Mammary epithelial cell (primary cell): ENCODE measurements at regions of chr20 and their contacts with region 1.

Region 1: GRCh38 chr20:18783385-18783959 is 30.1 kb upstream of the SCP2D1 start:
- DNase-seq: no peak
- H3K4me3 ChIP-seq: no peak overlapping the region
- H3K27ac ChIP-seq: no peak overlapping the region
- H3K4me1 ChIP-seq: no peaks in the 10 kb centered on the region
- H3K27me3 ChIP-seq: no peaks in the 10 kb centered on the region
- CTCF ChIP-seq: no peak

Region 2: DNA sequence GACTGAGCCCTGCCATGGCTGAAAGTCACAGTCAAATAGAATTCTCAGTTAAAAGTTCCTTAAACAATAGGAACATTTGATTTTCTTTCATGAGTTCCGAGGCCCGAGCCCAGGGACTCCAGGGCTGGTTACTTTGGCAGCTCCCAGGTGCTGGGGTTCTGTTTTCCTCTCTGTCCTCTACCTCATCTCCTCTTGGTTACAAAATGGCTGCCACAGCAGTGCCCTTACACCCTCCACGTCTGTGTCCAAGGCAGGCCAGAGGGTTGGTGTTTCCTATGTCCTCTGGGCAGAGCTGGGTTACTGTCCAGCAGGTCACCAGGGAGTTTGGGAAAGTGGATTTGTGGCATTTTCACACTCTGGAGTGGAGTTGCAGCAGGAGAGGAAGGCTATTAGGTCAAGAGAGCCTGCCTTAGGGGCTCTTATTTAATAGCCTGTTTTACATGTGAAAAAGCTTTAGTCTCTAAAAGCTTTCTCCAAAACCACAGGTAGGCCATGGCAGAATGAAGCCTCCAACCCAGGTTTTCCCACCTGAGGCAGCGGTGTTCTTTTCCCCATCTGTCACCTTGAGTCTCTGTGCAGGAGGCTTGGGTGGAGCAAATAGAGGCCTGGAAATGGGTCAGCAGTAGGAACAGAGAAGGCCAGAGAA is 84.6 kb before region 1 on chr20:
- CTCF ChIA-PET with region 1: no interaction called
- dilution Hi-C with region 1: loop called (anchors 5 kb)
- in situ Hi-C with region 1: no loop called
- intact Hi-C with region 1: no loop called
- DNase-seq: no peak
- H3K4me3 ChIP-seq: no peak overlapping the region
- H3K27ac ChIP-seq: no peak overlapping the region
- H3K4me1 ChIP-seq: peaks cover 7% of the 10 kb centered on the region
- H3K27me3 ChIP-seq: no peaks in the 10 kb centered on the region
- CTCF ChIP-seq: no peak

Region 3: GRCh38 chr20:18739751-18740166 is 43.7 kb before region 1 on chr20:
- CTCF ChIA-PET with region 1: no interaction called
- dilution Hi-C with region 1: no loop called
- in situ Hi-C with region 1: no loop called
- intact Hi-C with region 1: no loop called
- DNase-seq: no peak
- H3K4me3 ChIP-seq: no peak overlapping the region
- H3K27ac ChIP-seq: no peak overlapping the region
- H3K4me1 ChIP-seq: no peaks in the 10 kb centered on the region
- H3K27me3 ChIP-seq: no peaks in the 10 kb centered on the region
- CTCF ChIP-seq: no peak

Region 4: DNA sequence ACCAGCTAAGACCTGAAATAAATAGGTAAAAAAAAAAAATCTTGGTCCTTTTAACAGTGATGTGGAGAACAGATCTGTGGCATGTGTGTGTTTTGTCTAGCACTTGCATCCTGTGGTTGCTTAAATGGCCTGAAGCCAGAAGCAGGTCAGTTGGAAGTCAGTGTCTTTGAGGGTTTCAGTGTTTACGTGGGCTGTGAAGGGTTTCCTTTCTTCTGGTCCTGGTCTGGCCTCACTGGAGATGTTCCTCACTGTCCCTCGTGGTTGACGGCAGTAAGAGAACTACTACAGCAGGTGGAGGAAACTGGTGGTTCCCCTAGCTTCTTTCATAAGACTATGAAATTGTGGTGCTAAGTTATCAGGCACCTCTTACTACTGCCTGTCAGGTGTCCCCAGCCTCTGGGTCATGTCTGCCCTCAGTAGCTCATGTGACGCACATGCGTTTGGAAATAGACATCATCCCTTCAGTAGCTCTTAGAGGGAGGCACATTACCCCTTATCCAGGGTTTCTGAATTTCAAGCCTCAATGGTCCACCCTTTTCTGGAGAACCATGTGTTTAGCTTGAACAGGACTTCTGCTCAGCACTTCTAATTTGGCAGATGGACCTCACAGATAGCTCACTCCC is 29.3 kb before region 1 on chr20:
- CTCF ChIA-PET with region 1: no interaction called
- dilution Hi-C with region 1: no loop called
- in situ Hi-C with region 1: no loop called
- intact Hi-C with region 1: no loop called
- DNase-seq: no peak
- H3K4me3 ChIP-seq: no peak overlapping the region
- H3K27ac ChIP-seq: no peak overlapping the region
- H3K4me1 ChIP-seq: no peaks in the 10 kb centered on the region
- H3K27me3 ChIP-seq: no peaks in the 10 kb centered on the region
- CTCF ChIP-seq: no peak

Region 5: GRCh38 chr20:18973529-18974173 is 190.2 kb after region 1 on chr20:
- CTCF ChIA-PET with region 1: no interaction called
- dilution Hi-C with region 1: no loop called
- in situ Hi-C with region 1: no loop called
- intact Hi-C with region 1: no loop called
- DNase-seq: peak; percentile 21
- H3K4me3 ChIP-seq: no peak overlapping the region
- H3K27ac ChIP-seq: no peak overlapping the region
- H3K4me1 ChIP-seq: peaks cover 40% of the 10 kb centered on the region
- H3K27me3 ChIP-seq: no peaks in the 10 kb centered on the region
- CTCF ChIP-seq: no peak